Activated naive CD4-positive, alpha-beta T cell treated with anti-CD3 and anti-CD28 coated beads for 36 hours (primary cell): ENCODE measurements at regions of chr16 and their contacts with region 1.

Region 1: GRCh38 chr16:87636072-87636684 is 33.9 kb downstream of the JPH3 start:
- DNase-seq: peak; percentile 94
- H3K4me3 Mint-ChIP-seq: peak overlapping the region; percentile 57
- H3K27ac Mint-ChIP-seq: no peak overlapping the region
- H3K4me1 Mint-ChIP-seq: peaks cover 15% of the 10 kb centered on the region
- H3K27me3 Mint-ChIP-seq: no peaks in the 10 kb centered on the region

Region 2: DNA sequence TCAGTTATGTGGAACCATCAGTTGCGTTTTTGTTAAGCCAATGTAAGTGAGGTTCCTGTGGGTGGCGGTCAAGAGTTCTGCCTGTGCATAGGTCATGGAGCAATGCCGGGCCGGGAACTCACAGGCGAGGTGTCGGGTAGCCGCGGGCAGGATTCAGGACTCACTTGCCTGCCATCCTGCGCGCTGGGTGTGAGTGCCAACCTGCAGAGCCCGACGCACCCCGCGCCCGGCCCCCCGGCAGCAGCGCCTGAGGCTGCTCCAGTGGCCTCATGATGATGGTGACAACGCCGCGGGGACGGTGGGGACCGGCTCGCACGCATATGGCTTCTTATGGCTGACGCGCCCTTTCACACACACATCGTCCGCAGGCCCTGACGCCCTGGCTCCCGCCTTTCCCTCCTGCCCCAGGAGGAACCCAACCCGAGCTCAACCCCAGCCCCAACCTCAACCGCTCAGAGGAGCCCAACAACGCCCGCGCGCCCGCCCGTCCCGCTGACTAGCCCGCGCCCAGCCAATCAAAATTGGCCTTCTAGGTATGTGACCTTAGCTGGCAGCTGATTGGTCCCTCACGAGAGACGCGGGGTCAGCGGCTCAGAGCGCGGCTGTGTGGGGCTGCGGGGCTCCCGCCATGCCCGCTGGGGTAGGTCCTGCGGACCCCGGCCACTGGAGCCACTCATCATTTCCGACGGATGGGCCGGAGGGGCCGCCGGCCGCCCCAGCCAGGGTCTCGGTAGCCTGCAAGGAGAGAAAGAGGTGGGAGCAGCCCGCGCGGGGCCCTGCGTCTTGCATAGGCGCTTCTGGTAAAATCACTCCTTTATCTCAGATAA is 319.0 kb before region 1 on chr16 and contains the start of gene C16orf95:
- CTCF ChIA-PET with region 1: interaction called, 15 read pairs
- intact Hi-C with region 1: loop called (anchors 1 kb)
- DNase-seq: peak; percentile 98
- H3K4me3 Mint-ChIP-seq: peak within 1 kb of the TSS; percentile 88
- H3K27ac Mint-ChIP-seq: peak within 1 kb of the TSS; percentile 91
- H3K4me1 Mint-ChIP-seq: peaks cover 17% of the 10 kb centered on the region
- H3K27me3 Mint-ChIP-seq: no peaks in the 10 kb centered on the region
- total RNA-seq, gene C16orf95: 17.2 to 23.4 TPM

Region 3: GRCh38 chr16:87387942-87388817 is 248.0 kb before region 1 on chr16:
- CTCF ChIA-PET with region 1: interaction called, 21 read pairs
- intact Hi-C with region 1: loop called (anchors 1 kb)
- DNase-seq: peak; percentile 94
- H3K4me3 Mint-ChIP-seq: peak overlapping the region; percentile 49
- H3K27ac Mint-ChIP-seq: peak overlapping the region; percentile 93
- H3K4me1 Mint-ChIP-seq: peaks cover 39% of the 10 kb centered on the region
- H3K27me3 Mint-ChIP-seq: peaks cover 2% of the 10 kb centered on the region

Region 4: DNA sequence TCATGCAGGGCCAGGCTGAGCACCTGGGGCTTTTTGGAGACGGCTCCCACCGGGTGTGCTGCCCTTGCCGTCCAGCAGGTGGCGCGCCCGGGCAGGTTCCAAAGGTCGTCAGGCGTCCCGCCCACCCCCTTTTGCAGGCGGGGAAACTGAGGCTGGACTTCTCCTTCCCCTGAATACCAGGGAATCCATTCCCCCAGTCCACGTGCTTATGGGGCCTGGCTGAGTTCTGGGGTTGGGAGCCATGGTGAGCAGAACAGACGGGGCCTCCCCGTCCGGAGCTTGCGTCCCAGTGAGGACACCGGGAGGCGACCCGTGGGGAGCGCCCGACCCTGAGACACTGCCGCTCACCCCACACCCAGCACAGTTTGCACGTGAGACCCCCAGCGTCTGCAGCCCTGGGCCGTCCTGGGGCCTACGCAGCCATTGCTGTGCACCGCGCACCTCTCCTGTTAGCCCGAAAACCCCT is 85.6 kb before region 1 on chr16:
- CTCF ChIA-PET with region 1: interaction called, 8 read pairs
- intact Hi-C with region 1: loop called (anchors 1 kb)
- DNase-seq: peak; percentile 69
- H3K4me3 Mint-ChIP-seq: no peak overlapping the region
- H3K27ac Mint-ChIP-seq: no peak overlapping the region
- H3K4me1 Mint-ChIP-seq: no peaks in the 10 kb centered on the region
- H3K27me3 Mint-ChIP-seq: peaks cover 14% of the 10 kb centered on the region

Region 5: DNA sequence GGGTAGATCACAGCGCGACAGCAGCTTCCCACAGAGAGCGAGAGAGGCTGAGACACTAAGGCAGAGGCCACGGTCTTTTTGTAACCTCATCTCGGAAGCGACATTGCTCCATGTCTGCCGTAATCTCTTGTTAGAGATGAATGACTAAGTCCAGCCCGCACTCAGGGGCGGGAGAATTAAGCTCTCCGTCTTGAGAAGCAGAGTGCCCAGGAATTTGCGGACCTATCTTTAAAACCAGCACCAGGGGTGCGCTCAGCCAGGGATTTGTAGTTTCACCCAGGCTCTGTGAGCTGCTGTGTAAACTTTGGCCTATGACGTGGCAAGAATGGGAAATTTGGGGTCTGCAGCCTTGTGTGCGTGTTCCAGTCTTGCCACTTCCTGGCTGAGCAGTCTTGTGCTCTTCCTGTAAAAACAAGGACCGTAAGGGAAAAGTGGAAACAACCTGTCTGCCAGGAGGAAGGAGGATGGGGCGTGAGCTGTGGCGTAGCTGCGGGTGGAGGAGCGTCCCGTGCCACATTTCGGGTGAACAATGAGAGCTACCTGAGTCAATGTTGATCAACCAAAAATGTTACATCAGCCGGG is 49.9 kb before region 1 on chr16:
- CTCF ChIA-PET with region 1: interaction called, 19 read pairs
- intact Hi-C with region 1: loop called (anchors 1 kb)
- DNase-seq: no peak
- H3K4me3 Mint-ChIP-seq: no peak overlapping the region
- H3K27ac Mint-ChIP-seq: no peak overlapping the region
- H3K4me1 Mint-ChIP-seq: peaks cover 3% of the 10 kb centered on the region
- H3K27me3 Mint-ChIP-seq: peaks cover 25% of the 10 kb centered on the region

Region 6: DNA sequence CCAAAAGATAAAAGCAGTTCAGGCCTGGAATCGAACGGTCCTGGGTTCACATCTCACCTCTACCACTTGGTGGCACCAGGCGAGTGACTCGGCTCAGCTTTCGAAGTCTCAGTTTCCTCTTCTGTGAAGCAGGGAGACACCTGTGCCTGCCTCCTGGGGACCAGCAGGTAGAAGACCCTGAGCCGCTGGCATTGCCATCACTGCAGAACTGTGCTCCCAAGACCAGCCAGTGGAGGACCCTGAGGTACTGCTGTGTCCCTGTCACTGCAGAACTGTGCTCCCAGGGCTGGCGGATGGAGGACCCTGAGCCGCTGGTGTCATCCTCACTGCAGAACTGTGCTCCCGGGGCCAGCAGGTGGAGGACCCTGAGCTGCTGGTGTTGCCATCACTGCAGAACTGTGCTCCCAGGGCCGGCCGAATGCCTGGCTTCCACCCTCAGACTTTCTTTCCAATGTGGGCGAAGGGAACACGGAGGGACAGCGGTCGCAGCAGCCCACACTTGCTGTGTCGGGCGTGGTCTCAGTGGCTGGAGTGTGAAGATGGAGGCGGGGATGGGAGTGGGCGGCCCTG is 241.8 kb after region 1 on chr16:
- CTCF ChIA-PET with region 1: no interaction called
- intact Hi-C with region 1: loop called (anchors 5 kb)
- DNase-seq: peak; percentile 71
- H3K4me3 Mint-ChIP-seq: no peak overlapping the region
- H3K27ac Mint-ChIP-seq: no peak overlapping the region
- H3K4me1 Mint-ChIP-seq: peaks cover 47% of the 10 kb centered on the region
- H3K27me3 Mint-ChIP-seq: peaks cover 5% of the 10 kb centered on the region